ENCODE measurements at regions of chr6 and their contacts with region 1.

Region 1: GRCh38 chr6:82022601-82023102 is 224.9 kb downstream of the IBTK start:
- DNase-seq: peak; percentile 77
- H3K4me3 ChIP-seq: no peak overlapping the region
- H3K27ac ChIP-seq: peak overlapping the region; percentile 80
- H3K4me1 ChIP-seq: peaks cover 27% of the 10 kb centered on the region
- H3K27me3 ChIP-seq: no peaks in the 10 kb centered on the region
- CTCF ChIP-seq: no peak
- POLR2A ChIP-seq: peak; percentile 32

Region 2: GRCh38 chr6:81981812-81982211 is 40.8 kb before region 1 on chr6:
- CTCF ChIA-PET with region 1: no interaction called
- POLR2A ChIA-PET with region 1: no interaction called
- dilution Hi-C with region 1: no loop called
- intact Hi-C with region 1: loop called (anchors 1 kb)
- DNase-seq: peak; percentile 68
- H3K4me3 ChIP-seq: no peak overlapping the region
- H3K27ac ChIP-seq: peak overlapping the region; percentile 66
- H3K4me1 ChIP-seq: peaks cover 15% of the 10 kb centered on the region
- H3K27me3 ChIP-seq: no peaks in the 10 kb centered on the region
- CTCF ChIP-seq: no peak
- POLR2A ChIP-seq: no peak